ENCODE measurements at regions of chr4 and their contacts with region 1.

Region 1: DNA sequence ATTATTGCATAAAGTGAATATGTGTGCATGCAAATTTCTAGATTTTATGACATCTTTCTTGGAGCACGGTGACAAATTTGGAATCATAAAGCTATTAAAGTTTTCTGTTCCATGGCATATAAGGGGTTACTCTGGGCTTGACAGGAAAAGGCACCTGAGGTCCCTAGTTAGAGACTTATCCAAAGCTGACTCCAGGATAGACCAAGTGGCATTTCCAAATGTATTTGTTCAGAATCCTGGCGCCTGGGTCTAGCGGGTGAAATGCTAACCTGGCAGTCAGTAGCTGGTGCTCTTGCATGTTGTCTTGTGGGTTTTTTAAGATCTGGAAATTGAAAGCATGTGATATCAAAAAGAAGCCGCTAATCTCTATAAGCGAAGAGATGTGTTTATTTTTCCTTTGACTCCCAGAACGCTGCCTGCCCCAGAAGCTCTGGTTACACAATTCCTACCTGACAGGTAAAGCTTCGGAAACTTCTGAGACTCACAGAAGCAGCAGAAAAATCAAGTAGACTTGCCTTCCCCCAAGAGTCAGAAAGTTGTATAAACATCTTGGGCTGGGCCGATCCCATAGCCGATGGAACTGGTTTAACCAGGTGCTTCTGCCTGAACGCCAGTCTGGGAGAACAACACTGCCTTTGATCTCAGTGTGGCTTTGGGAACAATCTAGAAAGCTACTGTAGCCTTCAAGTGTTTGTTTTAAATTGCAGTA is 12.9 kb upstream of the ZCCHC4 start:
- DNase-seq: peak; percentile 89
- H3K4me3 ChIP-seq: 0 out of 2 replicates have a peak overlapping the region, but pooled peaks have one; percentile 15
- H3K4me3 Mint-ChIP-seq: peak overlapping the region; percentile 76
- H3K27ac Mint-ChIP-seq: peak overlapping the region; percentile 83
- H3K4me1 ChIP-seq: peaks cover 12% of the 10 kb centered on the region
- H3K4me1 Mint-ChIP-seq: peaks cover 19% of the 10 kb centered on the region
- H3K27me3 ChIP-seq: no peaks in the 10 kb centered on the region
- H3K27me3 Mint-ChIP-seq: no peaks in the 10 kb centered on the region
- CTCF ChIP-seq: no peak

Region 2: DNA sequence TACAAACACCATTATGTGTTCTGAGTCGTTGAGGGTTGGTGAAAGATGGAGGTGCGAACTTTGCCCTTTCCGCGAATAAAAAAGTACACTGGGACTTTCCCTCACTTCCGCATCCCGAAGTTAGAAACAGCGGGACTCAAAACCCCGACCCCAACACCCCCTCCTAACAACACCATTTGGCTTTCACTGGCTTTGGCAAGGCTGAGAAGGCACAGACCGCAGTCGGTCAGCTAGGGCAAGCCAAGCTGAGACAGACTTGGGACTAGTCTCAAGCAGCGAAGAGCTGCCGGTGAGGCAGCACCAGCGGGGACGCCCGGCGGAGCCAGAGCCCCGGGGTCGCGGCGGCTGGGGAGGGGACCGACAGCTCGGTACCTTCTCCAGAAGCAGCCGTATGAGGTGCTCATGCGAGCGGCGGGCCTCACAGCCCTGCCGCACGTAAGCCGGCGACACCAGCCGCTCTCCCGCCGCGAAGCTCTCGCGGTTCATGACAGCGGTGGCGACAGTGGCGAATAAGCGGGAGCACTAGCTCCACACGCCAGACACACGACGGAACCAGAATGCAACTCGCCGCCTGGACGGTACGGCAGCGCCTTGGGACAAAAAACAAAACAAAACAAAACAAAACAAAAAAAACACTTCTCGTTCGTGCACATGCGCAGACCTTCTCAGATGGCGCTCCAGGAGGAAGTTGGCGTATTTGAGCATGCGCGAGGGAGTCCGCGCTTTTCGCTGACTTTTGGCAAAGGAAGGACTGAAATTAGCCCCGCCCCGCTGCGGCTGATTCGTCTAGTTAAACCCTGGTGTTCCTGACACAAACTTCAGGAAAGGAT is 139.5 kb before region 1 on chr4 and contains the start of gene SEPSECS:
- CTCF ChIA-PET with region 1: interaction called, 4 read pairs
- POLR2A ChIA-PET with region 1: no interaction called
- intact Hi-C with region 1: loop called (anchors 5 kb)
- DNase-seq: peak; percentile 94 to 95
- H3K4me3 ChIP-seq: peak within 1 kb of the TSS; percentile 70
- H3K4me3 Mint-ChIP-seq: peak within 1 kb of the TSS; percentile 92
- H3K27ac Mint-ChIP-seq: peak within 1 kb of the TSS; percentile 92
- H3K4me1 ChIP-seq: peaks cover 14% of the 10 kb centered on the region; the same call in 1 of the 2 replicates
- H3K4me1 Mint-ChIP-seq: peaks cover 16% of the 10 kb centered on the region
- H3K27me3 ChIP-seq: no peaks in the 10 kb centered on the region
- H3K27me3 Mint-ChIP-seq: no peaks in the 10 kb centered on the region
- CTCF ChIP-seq: no peak
- total RNA-seq, gene SEPSECS: 5.7 and 6.0 TPM in 2 replicates

Region 3: DNA sequence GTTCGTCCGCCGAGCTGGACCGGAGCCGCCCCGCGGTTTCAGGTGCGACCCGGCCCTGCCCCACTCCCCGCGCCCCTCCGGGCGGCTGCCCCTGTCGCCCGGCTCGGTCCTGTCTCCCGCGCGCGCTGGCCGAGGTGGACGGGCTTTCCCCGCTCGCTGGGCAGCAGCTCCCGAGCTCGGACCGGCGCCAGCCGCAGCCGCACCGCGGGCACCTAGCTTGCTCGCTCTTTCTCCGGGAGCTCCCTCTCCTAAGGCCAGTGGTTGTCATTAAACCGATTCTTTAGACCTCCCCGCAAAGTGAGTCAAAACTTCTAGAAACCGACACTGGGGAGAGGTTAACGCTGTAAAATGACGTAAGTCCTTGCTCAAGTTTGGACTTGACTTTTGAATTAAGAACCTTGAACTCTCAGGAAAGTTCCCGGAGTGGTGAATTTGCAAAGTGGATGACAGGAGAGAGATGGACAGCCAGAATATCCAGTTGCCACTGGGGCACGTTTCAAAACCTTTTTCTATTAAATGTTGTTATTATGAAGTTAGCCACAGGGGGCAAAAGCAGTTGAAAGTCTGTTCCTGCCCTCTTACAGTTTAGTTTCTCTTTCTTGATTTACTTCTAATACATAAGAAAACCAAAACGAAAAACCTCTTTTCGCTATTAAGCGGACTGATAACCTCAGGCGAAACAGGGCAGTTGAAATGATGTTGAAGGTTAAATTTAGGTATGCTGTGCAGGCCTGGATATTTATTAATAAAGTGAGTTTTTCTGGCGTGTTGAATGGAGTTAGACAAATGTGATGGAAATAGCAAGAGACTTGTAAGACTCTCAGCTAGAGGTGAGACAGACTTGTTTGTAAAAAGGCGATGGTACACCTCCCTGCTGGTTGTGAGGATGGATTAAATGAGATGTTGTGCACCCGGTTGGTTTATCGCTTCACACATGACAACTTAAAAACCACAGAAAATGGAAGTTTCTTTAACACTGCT is 65.0 kb before region 1 on chr4:
- CTCF ChIA-PET with region 1: interaction called, 8 read pairs
- POLR2A ChIA-PET with region 1: interaction called, 3 read pairs
- intact Hi-C with region 1: loop called (anchors 1 kb)
- DNase-seq: peak; percentile 52 to 68
- H3K4me3 ChIP-seq: peak overlapping the region; percentile 94
- H3K4me3 Mint-ChIP-seq: peak overlapping the region; percentile 94
- H3K27ac Mint-ChIP-seq: peak overlapping the region; percentile 88
- H3K4me1 ChIP-seq: no peaks in the 10 kb centered on the region
- H3K4me1 Mint-ChIP-seq: no peaks in the 10 kb centered on the region
- H3K27me3 ChIP-seq: no peaks in the 10 kb centered on the region
- H3K27me3 Mint-ChIP-seq: no peaks in the 10 kb centered on the region
- CTCF ChIP-seq: peak; percentile 30 to 45

Region 4: DNA sequence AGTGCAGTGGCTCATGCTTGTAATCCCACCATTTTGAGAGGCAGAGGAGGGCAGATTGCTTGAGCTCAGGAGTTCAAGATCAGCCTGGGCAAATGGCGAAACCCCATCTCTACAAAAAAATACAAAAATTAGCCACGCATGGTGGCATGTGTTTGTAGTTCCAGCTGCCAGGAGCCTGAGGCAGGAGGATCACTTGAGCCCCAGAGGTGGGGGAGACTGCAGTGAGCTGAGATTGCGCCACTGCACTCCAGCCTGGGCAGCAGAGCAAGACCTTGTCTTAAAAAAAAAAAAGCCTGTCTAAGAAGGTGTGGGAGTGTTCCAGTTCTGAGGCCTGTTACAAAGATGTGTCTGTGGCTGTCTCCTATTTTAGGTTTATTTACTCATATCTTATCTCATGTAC is 27.8 kb before region 1 on chr4:
- CTCF ChIA-PET with region 1: no interaction called
- POLR2A ChIA-PET with region 1: no interaction called
- intact Hi-C with region 1: no loop called
- DNase-seq: no peak
- H3K4me3 ChIP-seq: no peak overlapping the region
- H3K4me3 Mint-ChIP-seq: no peak overlapping the region
- H3K27ac Mint-ChIP-seq: no peak overlapping the region
- H3K4me1 ChIP-seq: no peaks in the 10 kb centered on the region
- H3K4me1 Mint-ChIP-seq: no peaks in the 10 kb centered on the region
- H3K27me3 ChIP-seq: no peaks in the 10 kb centered on the region
- H3K27me3 Mint-ChIP-seq: no peaks in the 10 kb centered on the region
- CTCF ChIP-seq: no peak

Region 5: DNA sequence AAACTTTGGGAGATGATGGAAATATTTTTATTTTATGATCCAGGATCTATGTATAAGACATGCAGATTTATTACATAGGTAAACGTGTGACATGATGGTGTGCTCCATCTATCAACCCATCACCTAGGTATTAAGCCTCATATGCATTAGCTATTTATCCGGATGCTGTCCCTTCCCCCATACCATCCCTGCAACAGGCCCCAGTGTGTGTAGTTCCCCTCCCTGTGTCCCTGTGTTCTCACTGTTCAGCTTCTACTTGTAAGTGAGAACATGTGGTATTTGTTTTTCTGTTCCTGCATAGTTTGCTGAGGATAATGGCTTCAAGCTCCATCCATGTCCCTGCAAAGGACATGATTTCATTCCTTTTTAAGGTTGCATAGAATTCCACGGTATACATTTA is 15.2 kb before region 1 on chr4:
- CTCF ChIA-PET with region 1: no interaction called
- POLR2A ChIA-PET with region 1: no interaction called
- intact Hi-C with region 1: loop called (anchors 1 kb)
- DNase-seq: no peak
- H3K4me3 ChIP-seq: no peak overlapping the region
- H3K4me3 Mint-ChIP-seq: no peak overlapping the region
- H3K27ac Mint-ChIP-seq: no peak overlapping the region
- H3K4me1 ChIP-seq: peaks cover 7% of the 10 kb centered on the region; the same call in 1 of the 2 replicates
- H3K4me1 Mint-ChIP-seq: no peaks in the 10 kb centered on the region
- H3K27me3 ChIP-seq: no peaks in the 10 kb centered on the region
- H3K27me3 Mint-ChIP-seq: no peaks in the 10 kb centered on the region
- CTCF ChIP-seq: no peak

Region 6: GRCh38 chr4:25439918-25440477 is 140.4 kb after region 1 on chr4:
- CTCF ChIA-PET with region 1: no interaction called
- POLR2A ChIA-PET with region 1: no interaction called
- intact Hi-C with region 1: no loop called
- DNase-seq: peak; percentile 53 to 72
- H3K4me3 ChIP-seq: no peak overlapping the region
- H3K4me3 Mint-ChIP-seq: no peak overlapping the region
- H3K27ac Mint-ChIP-seq: no peak overlapping the region
- H3K4me1 ChIP-seq: no peaks in the 10 kb centered on the region
- H3K4me1 Mint-ChIP-seq: peaks cover 6% of the 10 kb centered on the region
- H3K27me3 ChIP-seq: no peaks in the 10 kb centered on the region
- H3K27me3 Mint-ChIP-seq: no peaks in the 10 kb centered on the region
- CTCF ChIP-seq: peak; percentile 72 to 79

Region 7: GRCh38 chr4:25580633-25581467 is 281.2 kb after region 1 on chr4:
- CTCF ChIA-PET with region 1: no interaction called
- POLR2A ChIA-PET with region 1: no interaction called
- intact Hi-C with region 1: no loop called
- DNase-seq: no peak
- H3K4me3 ChIP-seq: no peak overlapping the region
- H3K4me3 Mint-ChIP-seq: no peak overlapping the region
- H3K27ac Mint-ChIP-seq: no peak overlapping the region
- H3K4me1 ChIP-seq: no peaks in the 10 kb centered on the region
- H3K4me1 Mint-ChIP-seq: no peaks in the 10 kb centered on the region
- H3K27me3 ChIP-seq: no peaks in the 10 kb centered on the region
- H3K27me3 Mint-ChIP-seq: no peaks in the 10 kb centered on the region
- CTCF ChIP-seq: no peak

Measured in Caco-2 (cell line).